Mammary epithelial cell (primary cell): ENCODE measurements at regions of chr16 and their contacts with region 1.

Region 1: GRCh38 chr16:84952335-84953189 is 58.8 kb downstream of the ZDHHC7 start:
- DNase-seq: peak; percentile 55
- H3K4me3 ChIP-seq: no peak overlapping the region
- H3K27ac ChIP-seq: no peak overlapping the region
- H3K4me1 ChIP-seq: peaks cover 4% of the 10 kb centered on the region
- H3K27me3 ChIP-seq: no peaks in the 10 kb centered on the region
- CTCF ChIP-seq: peak; percentile 81 to 89

Region 2: DNA sequence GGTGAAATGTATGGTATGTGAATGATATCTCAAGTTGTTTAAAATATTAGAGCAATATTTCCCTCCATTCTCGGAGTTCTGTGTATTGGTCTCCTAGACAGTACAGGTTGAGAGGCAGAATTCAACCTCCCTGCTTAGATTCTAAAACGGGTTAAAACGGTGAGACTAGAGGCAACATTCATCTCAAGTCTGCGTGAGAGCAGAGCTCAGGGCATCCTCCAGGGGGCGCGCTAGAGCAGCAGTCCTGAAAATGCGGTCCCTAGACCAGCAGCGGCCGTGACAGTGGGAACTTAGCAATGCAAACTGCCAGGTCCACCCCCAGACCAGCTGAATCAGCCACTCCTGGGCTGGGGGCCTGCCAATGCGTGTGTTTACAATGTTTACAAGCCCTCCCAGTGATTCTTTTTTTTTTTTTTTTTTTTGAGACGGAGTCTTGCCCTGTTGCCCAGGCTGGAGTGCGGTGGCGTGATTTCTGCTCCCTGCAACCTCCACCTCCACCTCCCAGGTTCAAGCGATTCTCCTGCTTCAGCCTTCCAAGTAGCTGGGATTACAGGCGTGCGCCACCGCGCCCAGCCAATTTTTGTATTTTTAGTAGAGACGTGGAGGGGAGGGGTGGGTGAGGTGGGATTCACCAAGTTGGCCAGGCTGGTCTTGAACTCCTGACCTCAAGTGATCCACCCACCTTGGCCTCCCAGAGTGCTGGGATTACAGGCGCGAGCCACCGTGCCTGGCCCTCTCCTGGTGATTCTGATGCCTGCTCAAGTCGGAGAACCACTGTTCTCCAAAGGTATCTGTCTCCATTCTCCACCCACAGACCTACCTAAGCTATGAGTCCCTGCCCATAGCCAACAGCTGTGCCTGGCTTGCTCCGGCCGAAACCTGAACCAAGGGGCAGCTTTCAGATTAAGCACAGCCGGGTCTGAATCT is 280.0 kb before region 1 on chr16:
- CTCF ChIA-PET with region 1: no interaction called
- dilution Hi-C with region 1: no loop called
- in situ Hi-C with region 1: no loop called
- intact Hi-C with region 1: loop called (anchors 1 kb)
- DNase-seq: peak; percentile 39
- H3K4me3 ChIP-seq: no peak overlapping the region
- H3K27ac ChIP-seq: no peak overlapping the region
- H3K4me1 ChIP-seq: no peaks in the 10 kb centered on the region
- H3K27me3 ChIP-seq: no peaks in the 10 kb centered on the region
- CTCF ChIP-seq: peak; percentile 97

Region 3: DNA sequence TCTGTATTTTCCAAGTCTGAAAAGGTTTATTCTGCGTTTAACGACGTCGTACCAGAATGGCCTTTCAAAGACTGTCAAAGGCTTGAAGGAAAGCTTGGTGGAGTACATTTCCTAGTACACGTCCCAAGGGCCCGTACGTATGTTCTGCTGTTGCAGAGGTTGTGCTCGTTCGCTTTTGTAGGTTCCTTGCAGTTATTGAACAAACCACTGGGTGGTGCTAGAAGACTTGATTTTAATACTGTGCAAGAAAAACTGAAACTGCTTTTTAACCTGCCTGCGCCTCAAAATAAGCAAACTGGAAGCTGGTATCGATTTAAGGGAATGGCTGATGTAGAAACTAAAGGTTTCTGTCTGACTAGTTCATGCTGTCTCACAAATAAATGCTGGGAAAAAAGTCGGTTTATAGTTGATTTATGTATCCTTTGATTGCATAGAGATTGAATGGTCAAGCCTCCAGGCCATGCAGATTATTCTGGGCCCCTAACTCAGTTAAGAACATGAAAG is 198.2 kb before region 1 on chr16:
- CTCF ChIA-PET with region 1: interaction called, 5 read pairs
- dilution Hi-C with region 1: loop called (anchors 10 kb)
- in situ Hi-C with region 1: no loop called
- intact Hi-C with region 1: loop called (anchors 1 kb)
- DNase-seq: peak; percentile 84
- H3K4me3 ChIP-seq: peak overlapping the region in 2 of 3 experiments; percentile 6 to 34
- H3K27ac ChIP-seq: peak overlapping the region; percentile 85
- H3K4me1 ChIP-seq: peaks cover 35% of the 10 kb centered on the region
- H3K27me3 ChIP-seq: no peaks in the 10 kb centered on the region
- CTCF ChIP-seq: peak; percentile 77 to 80

Region 4: GRCh38 chr16:84925092-84925772 is 27.3 kb before region 1 on chr16:
- CTCF ChIA-PET with region 1: interaction called, 4 read pairs
- dilution Hi-C with region 1: no loop called
- in situ Hi-C with region 1: no loop called
- intact Hi-C with region 1: loop called (anchors 1 kb)
- DNase-seq: no peak
- H3K4me3 ChIP-seq: no peak overlapping the region
- H3K27ac ChIP-seq: no peak overlapping the region
- H3K4me1 ChIP-seq: no peaks in the 10 kb centered on the region
- H3K27me3 ChIP-seq: no peaks in the 10 kb centered on the region
- CTCF ChIP-seq: peak; percentile 81 to 92